ENCODE measurements at regions of chr6 and their contacts with region 1.

Region 1: GRCh38 chr6:90274451-90275030 is 22.1 kb downstream of the BACH2 start:
- DNase-seq: peak; percentile 75
- H3K4me3 Mint-ChIP-seq: peak overlapping the region; percentile 75
- H3K27ac Mint-ChIP-seq: peak overlapping the region; percentile 94
- H3K4me1 Mint-ChIP-seq: peaks cover 86% of the 10 kb centered on the region
- H3K27me3 Mint-ChIP-seq: no peaks in the 10 kb centered on the region

Region 2: GRCh38 chr6:90068264-90068663 is 206.3 kb before region 1 on chr6:
- intact Hi-C with region 1: no loop called
- DNase-seq: no peak
- H3K4me3 Mint-ChIP-seq: peak overlapping the region; percentile 6
- H3K27ac Mint-ChIP-seq: peak overlapping the region; percentile 25
- H3K4me1 Mint-ChIP-seq: peaks cover 81% of the 10 kb centered on the region
- H3K27me3 Mint-ChIP-seq: no peaks in the 10 kb centered on the region

Region 3: DNA sequence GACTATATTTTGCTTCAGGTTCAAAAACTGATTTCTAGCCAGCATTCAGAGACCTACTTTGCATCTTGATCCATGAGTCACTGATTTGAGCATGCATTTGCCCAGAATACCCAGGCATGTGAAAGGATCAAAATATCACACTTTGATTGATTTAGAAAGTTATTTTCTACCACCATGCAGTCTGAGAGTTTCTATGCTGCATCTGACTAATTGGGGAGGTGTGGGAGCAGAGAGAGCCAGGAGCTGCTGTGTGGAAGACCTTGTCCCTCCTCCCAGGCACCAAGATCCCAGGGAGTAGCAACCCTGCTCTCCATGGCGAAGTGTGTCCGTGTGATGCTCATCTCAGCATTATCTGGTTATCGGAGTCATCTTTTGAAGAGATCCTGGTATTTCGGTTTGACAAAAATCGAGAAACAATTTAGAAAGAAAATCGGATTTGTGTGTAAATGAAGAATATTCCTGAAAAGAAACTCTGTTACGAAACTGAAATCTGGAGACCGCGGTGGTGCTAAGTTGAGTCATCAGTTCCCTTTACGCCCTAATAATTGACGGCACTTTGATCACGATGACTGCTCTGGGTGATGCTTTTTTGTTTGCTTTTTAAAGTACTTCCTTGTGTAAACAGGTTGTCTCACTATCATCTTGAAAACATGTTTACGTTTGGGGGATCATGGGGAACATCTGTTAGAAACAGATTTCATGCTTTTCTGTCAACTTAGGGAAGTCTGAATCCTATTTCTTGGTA is 171.3 kb before region 1 on chr6:
- intact Hi-C with region 1: loop called (anchors 1 kb)
- DNase-seq: no peak
- H3K4me3 Mint-ChIP-seq: peak overlapping the region; percentile 79
- H3K27ac Mint-ChIP-seq: peak overlapping the region; percentile 88
- H3K4me1 Mint-ChIP-seq: peaks cover 70% of the 10 kb centered on the region
- H3K27me3 Mint-ChIP-seq: no peaks in the 10 kb centered on the region

Region 4: GRCh38 chr6:90202156-90202555 is 72.4 kb before region 1 on chr6:
- intact Hi-C with region 1: loop called (anchors 1 kb)
- DNase-seq: no peak
- H3K4me3 Mint-ChIP-seq: peak overlapping the region; percentile 71
- H3K27ac Mint-ChIP-seq: peak overlapping the region; percentile 85
- H3K4me1 Mint-ChIP-seq: peaks cover 43% of the 10 kb centered on the region
- H3K27me3 Mint-ChIP-seq: no peaks in the 10 kb centered on the region

Region 5: GRCh38 chr6:90230548-90231215 is 43.9 kb before region 1 on chr6:
- intact Hi-C with region 1: loop called (anchors 1 kb)
- DNase-seq: no peak
- H3K4me3 Mint-ChIP-seq: peak overlapping the region; percentile 10
- H3K27ac Mint-ChIP-seq: peak overlapping the region; percentile 31
- H3K4me1 Mint-ChIP-seq: peaks cover 89% of the 10 kb centered on the region
- H3K27me3 Mint-ChIP-seq: no peaks in the 10 kb centered on the region

Region 6: DNA sequence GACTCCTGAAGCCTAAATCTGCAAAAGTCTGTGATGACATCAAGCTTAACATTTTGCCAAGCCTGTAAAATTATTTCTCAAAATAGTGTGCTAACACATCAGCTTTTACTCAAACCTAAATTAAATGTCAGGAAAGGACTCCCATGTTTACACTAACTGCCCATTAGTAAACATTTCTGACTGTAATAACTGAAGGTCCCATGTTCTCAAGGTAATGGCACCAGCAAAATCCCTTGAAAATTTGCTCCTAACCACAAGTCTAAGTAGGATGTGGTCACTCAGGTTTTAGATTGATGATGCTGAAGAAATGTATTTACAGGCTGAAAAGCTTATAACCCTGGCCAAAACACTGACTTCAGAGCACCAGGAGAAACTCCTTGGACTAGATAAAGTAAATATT is 10.9 kb before region 1 on chr6:
- intact Hi-C with region 1: loop called (anchors 1 kb)
- DNase-seq: no peak
- H3K4me3 Mint-ChIP-seq: no peak overlapping the region
- H3K27ac Mint-ChIP-seq: no peak overlapping the region
- H3K4me1 Mint-ChIP-seq: peaks cover 94% of the 10 kb centered on the region
- H3K27me3 Mint-ChIP-seq: no peaks in the 10 kb centered on the region

Region 7: DNA sequence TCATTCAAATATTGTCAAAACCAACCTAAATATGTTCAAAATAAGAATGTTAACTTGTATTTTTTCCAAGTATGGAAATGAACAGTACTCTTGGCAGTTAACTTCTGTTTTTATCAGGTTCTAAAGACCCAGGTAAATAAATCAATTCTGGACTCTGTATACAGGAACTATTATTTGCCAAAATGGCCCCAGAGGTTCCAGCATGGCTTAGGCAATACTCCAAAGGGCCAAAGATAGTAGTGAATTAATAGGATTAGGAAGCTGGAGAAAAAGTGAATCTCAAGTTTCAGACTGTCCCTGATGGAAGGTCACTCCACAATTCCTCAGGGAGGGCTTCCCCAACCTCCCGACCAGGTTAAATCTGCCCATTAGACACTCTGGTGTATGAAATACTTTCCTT is 15.4 kb after region 1 on chr6:
- intact Hi-C with region 1: no loop called
- DNase-seq: no peak
- H3K4me3 Mint-ChIP-seq: no peak overlapping the region
- H3K27ac Mint-ChIP-seq: no peak overlapping the region
- H3K4me1 Mint-ChIP-seq: peaks cover 94% of the 10 kb centered on the region
- H3K27me3 Mint-ChIP-seq: peaks cover 4% of the 10 kb centered on the region

Region 8: DNA sequence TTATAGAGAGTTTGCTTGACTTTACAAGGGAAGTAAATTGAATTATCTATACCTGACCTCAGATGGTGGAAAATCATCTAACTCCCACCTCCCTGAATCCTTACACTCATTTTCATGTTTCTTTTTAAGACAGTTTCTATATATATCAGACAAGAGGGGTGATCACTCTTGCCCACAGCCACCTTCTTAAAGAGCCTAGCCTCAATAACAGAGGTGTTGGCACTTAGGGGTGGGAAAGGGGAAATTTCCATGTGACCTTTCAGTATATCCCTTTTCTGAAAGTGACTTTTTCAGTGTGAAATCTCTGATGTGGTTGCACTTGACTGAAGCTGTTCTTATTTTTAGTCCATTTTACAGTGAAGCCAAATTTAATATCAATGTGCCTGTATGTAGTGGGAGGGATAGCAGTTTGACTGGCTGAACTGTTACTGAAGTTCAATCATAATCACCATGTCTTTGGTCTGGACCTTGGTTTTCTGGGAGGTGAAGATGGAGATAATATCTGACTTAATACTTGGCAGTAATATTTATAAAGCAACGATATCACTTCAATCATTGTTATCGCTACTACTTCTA is 171.1 kb after region 1 on chr6:
- intact Hi-C with region 1: loop called (anchors 1 kb)
- DNase-seq: no peak
- H3K4me3 Mint-ChIP-seq: no peak overlapping the region
- H3K27ac Mint-ChIP-seq: peak overlapping the region; percentile 88
- H3K4me1 Mint-ChIP-seq: peaks cover 66% of the 10 kb centered on the region
- H3K27me3 Mint-ChIP-seq: no peaks in the 10 kb centered on the region

Region 9: DNA sequence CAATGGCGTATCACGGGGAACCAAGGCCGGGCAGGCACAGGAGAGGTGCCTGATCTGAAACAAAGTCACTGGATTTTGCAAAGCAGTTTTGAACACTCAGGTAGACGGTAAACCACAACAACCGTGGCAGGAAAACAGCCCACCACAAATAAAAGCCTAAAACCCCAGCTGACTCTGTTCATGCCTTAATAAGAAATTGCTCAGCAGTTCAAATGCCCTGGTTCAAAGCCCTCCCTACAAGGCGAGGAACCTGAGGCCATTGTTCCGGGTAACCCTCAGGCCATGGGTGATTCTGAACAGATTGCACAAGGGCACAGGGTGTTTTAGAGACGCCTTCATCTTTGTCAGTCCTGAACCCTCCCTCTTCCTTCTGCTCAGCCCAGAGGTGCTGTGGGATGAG is 198.2 kb after region 1 on chr6:
- intact Hi-C with region 1: loop called (anchors 1 kb)
- DNase-seq: peak; percentile 52
- H3K4me3 Mint-ChIP-seq: peak overlapping the region; percentile 68
- H3K27ac Mint-ChIP-seq: peak overlapping the region; percentile 92
- H3K4me1 Mint-ChIP-seq: peaks cover 100% of the 10 kb centered on the region
- H3K27me3 Mint-ChIP-seq: no peaks in the 10 kb centered on the region

Region 10: DNA sequence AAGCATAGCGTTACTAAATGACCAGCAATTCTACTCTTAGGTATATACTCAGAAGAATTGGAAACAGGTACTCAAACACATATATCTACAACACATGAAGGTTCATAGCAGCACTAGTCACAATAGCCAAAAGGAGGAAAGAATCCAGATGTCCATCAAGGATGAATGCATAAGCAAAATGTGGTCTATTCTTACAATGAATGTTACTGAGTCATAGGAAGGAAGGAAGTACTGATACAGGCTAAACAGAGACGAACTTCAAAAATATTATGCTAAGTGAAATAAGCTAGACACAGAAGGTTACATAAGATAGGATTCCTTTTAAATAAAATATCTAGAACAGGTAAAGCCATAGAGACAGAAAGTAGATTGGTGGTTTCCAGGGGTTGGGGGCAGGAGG is 218.8 kb after region 1 on chr6:
- intact Hi-C with region 1: no loop called
- DNase-seq: no peak
- H3K4me3 Mint-ChIP-seq: no peak overlapping the region
- H3K27ac Mint-ChIP-seq: no peak overlapping the region
- H3K4me1 Mint-ChIP-seq: peaks cover 8% of the 10 kb centered on the region
- H3K27me3 Mint-ChIP-seq: peaks cover 14% of the 10 kb centered on the region

Region 11: DNA sequence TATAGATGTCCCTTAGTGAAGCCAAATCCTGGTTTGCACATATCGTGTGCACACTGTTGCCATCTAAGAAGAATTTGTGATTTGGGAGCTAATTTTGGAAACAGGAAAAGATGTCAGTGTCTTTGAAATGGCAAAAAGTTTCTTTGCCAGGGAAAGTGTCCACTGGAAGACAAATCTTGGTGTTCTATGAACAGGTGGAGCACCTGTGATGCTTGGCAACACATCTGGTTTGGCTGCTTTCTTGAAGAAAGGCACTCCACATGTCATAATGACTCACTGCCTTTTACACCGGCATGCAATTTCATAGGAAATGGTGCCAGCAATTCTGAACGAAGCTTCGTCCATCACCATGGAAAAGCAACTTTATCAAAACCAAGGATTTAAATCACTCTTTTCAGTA is 1352.4 kb after region 1 on chr6:
- intact Hi-C with region 1: no loop called
- DNase-seq: no peak
- H3K4me3 Mint-ChIP-seq: no peak overlapping the region
- H3K27ac Mint-ChIP-seq: no peak overlapping the region
- H3K4me1 Mint-ChIP-seq: no peaks in the 10 kb centered on the region
- H3K27me3 Mint-ChIP-seq: no peaks in the 10 kb centered on the region